Left cardiac atrium (tissue), 4 donors: ENCODE measurements at regions of chr9 and their contacts with region 1.

Region 1: GRCh38 chr9:69971643-69972449 is 71.8 kb upstream of the MAMDC2 start:
- DNase-seq: peak; percentile 82
- ATAC-seq: peak; percentile 79 to 81

Region 2: DNA sequence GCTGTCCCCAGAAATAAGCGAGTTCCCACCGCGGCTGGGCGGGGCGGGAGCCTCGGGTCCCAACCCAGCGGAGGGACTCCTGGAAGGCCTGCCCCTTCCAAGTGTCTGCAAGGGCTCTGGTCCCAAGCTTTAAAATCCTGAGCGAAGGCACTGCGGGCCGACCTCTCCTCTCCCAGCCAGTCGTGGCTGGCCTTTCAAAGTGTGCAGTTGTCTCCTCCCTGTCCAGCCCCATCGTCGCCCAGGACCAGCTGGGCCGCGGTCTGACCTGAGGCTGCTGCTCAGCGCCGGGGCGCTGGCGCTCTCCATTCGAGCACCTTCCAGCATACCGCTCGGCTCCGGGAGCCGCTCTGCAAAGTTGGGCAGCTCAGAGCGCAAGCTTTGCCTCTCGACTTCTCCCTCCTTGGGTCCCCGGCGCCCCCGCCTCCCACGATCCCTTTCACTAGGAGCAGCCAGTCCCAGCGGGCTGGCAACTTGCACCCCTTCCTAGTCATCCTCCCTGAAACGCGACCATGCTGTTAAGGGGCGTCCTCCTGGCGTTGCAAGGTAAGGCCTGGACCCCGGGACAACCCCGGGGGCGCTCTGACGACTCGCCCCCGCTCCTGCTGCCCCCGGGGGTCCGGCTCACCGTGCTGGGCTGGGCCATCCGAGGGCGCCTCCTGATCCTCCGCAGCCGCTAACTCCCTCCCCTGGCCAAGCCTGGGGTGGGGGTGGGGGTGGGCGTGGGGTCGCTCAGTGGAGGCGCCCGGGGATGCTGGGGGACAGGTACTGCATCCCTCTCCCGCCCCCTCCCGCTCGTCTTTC is 72.0 kb after region 1 on chr9 and contains the start of gene MAMDC2:
- intact Hi-C with region 1: loop called in 1 of 2 experiments (anchors 5 kb)
- DNase-seq: peak; percentile 58
- ATAC-seq: peak; percentile 71 to 84
- total RNA-seq, gene MAMDC2: 12.3 to 19.6 TPM

Region 3: GRCh38 chr9:70111042-70111602 is 139.3 kb after region 1 on chr9:
- intact Hi-C with region 1: loop called (anchors 1 to 5 kb)
- DNase-seq: peak; percentile 90
- ATAC-seq: peak; percentile 58 to 84

Region 4: GRCh38 chr9:70229579-70229978 is 257.7 kb after region 1 on chr9:
- intact Hi-C with region 1: loop called in 1 of 2 experiments (anchors 2 kb)
- DNase-seq: no peak
- ATAC-seq: peak; percentile 35 to 51